Dorsolateral prefrontal cortex (tissue), 120 donors: ENCODE measurements at regions of chr1 and their contacts with region 1.

Region 1: GRCh38 chr1:53238197-53239155 is at the start of gene MAGOH:
- DNase-seq: peak; percentile 89 to 98 (median 94)
- H3K4me3 ChIP-seq: peak within 1 kb of the TSS; percentile 64 to 100 (median 96)
- H3K27ac ChIP-seq: peak within 1 kb of the TSS in 52 of 59 donors; percentile 9 to 90 (median 70)
- H3K27me3 ChIP-seq: no peaks in the 10 kb centered on the region
- CTCF ChIP-seq: peak in 18 of 56 donors; percentile 12 to 46 (median 20)
- total RNA-seq, gene MAGOH: 14.8 to 34.2 (median 24.6) TPM

Region 2: GRCh38 chr1:52404116-52404986 is 834.1 kb before region 1 on chr1 and contains the starts of genes ORC1 and PRPF38A:
- intact Hi-C with region 1: loop called in 1 of 2 experiments (anchors 5 kb)
- DNase-seq: peak; percentile 96 to 99 (median 98)
- H3K4me3 ChIP-seq: peak within 1 kb of the TSS; percentile 31 to 99 (median 90)
- H3K27ac ChIP-seq: peak within 1 kb of the TSS in 57 of 59 donors; percentile 20 to 96 (median 85)
- H3K27me3 ChIP-seq: no peaks in the 10 kb centered on the region
- CTCF ChIP-seq: peak in 44 of 56 donors; percentile 8 to 56 (median 38)
- total RNA-seq, gene ORC1: 0.17 to 1.3 (median 0.44) TPM in 115 of 120 experiments, not detected in the others
- total RNA-seq, gene PRPF38A: 30.5 to 72.7 (median 39.3) TPM

Region 3: DNA sequence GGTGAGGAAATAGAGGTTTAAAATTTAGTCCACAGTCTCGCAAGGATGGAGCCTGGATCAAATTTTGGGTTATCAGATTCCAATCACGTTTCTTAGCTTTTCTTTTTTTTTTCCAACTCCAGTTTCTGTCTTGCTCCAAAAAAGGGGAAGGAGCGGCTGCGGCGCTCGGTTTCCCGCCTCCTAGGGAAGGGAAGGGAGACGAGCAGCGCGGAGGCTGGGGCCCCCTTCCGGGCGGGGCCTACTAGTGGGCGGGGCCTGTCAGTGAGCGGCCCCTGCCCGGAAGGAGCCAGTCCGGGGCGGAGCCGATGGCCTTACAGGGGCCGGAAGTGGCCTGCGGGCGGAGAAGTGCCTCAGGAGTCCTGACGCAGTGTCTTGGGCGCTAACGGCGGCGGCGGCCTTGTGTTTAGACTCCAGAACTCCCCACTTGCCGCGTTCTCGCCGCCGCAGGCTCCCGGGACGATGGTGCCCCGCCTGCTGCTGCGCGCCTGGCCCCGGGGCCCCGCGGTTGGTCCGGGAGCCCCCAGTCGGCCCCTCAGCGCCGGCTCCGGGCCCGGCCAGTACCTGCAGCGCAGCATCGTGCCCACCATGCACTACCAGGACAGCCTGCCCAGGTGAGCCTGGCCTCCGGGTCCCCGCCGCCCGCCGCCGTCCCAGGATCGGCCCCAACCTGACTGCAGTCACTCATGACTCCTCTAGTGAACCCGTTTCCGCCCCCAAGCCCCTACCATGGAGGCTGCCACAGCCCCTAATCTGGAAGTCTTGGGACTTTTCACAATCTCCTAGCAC is 41.8 kb before region 1 on chr1 and contains the start of gene CPT2:
- intact Hi-C with region 1: loop called in 1 of 2 experiments (anchors 5 kb)
- DNase-seq: peak; percentile 87 to 96 (median 94)
- H3K4me3 ChIP-seq: peak within 1 kb of the TSS; percentile 72 to 100 (median 96)
- H3K27ac ChIP-seq: peak within 1 kb of the TSS; percentile 63 to 97 (median 92)
- H3K27me3 ChIP-seq: no peaks in the 10 kb centered on the region
- CTCF ChIP-seq: peak in 52 of 56 donors; percentile 11 to 68 (median 37)
- total RNA-seq, gene CPT2: 4.3 to 20.0 (median 10.7) TPM

Region 4: DNA sequence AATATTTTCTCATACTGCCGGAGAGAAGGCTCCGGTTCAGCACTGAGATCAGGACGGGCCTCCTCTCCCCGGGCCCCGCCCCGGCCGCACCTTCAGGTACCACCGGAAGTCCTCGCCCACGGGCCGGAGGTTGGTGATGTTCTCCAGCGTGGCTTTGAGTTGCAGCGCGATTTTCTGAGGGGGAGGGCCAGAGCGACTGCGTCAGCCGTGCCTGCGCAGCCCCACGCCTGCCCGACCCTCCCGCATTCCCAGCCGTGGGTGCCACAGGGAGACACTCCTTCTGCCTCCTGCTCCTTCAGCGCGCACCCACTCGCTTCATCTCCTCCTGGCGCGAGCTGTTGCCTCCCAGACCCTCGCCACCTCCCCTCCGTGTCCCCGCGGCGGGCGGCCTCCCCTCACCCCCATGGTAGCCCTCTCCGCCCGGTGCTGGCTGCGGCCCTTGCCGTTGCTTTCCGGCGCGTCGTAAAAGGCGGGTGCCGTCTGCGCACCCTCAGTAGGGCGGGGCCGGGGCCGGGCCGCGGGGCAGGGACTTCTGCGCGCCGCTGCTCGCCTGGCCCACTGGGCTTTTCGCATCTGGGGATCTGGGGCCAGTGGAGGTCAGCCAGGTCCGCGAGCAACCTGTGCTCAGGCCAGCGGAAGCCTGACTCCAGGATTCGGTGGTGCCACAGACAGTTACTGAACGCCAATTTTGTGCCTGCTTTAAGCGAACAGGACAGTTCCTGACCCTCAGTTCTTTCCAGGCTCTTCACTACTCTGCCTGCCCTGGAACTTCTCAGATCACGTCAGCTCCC is 18.1 kb before region 1 on chr1 and contains the start of gene CZIB:
- intact Hi-C with region 1: loop called (anchors 2 kb)
- DNase-seq: peak; percentile 80 to 97 (median 90)
- H3K4me3 ChIP-seq: peak within 1 kb of the TSS; percentile 67 to 99 (median 89)
- H3K27ac ChIP-seq: peak within 1 kb of the TSS; percentile 65 to 99 (median 96)
- H3K27me3 ChIP-seq: no peaks in the 10 kb centered on the region
- CTCF ChIP-seq: peak in 21 of 56 donors; percentile 5 to 40 (median 19)
- total RNA-seq, gene CZIB: 49.0 to 99.7 (median 72.4) TPM

Region 5: DNA sequence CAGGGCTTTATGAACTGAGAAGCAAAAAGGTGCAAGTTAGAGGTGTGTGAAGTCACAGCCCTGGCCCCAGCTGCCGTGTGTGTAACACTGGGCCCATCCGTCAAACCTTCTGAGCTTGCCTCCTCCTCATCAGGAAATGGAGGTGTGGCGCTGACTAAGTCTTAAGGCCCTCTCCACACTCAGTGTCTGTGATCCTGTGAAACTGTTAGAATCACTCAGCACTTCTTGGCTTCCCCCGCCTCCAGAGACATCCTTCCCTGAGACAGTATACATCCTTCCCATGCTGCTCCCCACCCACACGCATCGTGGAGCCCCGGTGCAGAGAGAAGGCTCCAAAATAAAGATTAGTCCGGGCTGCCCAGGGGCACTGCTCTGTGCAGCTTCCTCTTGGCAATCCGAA is 56.1 kb after region 1 on chr1:
- intact Hi-C with region 1: no loop called
- DNase-seq: peak in 7 of 10 donors; percentile 39 to 81 (median 69)
- H3K4me3 ChIP-seq: no peak overlapping the region
- H3K27ac ChIP-seq: peak overlapping the region in 43 of 59 donors; percentile 8 to 81 (median 57)
- H3K27me3 ChIP-seq: no peaks in the 10 kb centered on the region
- CTCF ChIP-seq: no peak

Region 6: DNA sequence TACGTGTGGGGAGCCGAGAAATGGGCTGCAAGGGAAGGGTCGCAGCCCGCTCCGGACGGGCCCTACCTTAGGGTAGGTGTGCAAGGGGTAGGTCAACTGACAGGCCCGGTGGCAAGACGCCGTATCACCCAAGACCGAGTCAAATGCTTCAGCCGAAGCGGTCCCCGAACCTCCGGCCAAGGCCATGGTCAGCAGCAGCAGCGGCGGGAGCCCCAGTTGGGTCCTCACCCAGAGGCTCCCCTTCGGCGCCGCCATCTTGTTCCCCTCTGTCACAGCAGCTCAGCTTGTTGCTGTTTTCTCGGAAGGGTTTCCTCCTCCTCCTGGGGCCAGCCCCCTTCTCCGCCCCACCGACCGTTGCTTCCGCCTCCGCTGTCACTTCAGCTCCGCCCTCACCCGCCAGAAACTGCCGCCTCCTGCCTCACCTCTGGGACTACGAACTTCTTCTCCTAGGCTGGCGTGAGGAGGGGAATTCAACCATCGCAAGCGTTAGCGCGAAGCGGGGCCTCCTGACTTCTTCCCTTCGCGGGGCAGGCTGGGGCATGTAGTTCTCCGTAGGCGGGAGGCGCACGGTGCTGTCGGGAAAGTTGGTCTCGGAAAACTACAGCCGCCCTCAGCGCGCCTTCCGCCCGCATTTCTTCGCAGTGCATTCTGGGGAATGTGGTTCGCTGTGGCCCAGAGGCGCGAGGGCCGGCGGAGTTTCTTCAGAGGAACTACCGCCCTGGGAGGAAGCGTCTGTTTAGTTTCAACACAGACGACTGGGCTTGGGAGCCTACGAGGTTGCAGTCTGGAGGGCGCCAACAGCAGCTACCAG is 814.7 kb after region 1 on chr1 and contains the starts of genes TCEANC2 and TMEM59:
- intact Hi-C with region 1: loop called in 1 of 2 experiments (anchors 10 kb)
- DNase-seq: peak; percentile 94 to 99 (median 98)
- H3K4me3 ChIP-seq: peak within 1 kb of the TSS; percentile 71 to 100 (median 95)
- H3K27ac ChIP-seq: peak within 1 kb of the TSS; percentile 82 to 99 (median 96)
- H3K27me3 ChIP-seq: no peaks in the 10 kb centered on the region
- CTCF ChIP-seq: peak in 30 of 56 donors; percentile 4 to 57 (median 29)
- total RNA-seq, gene TCEANC2: 5.2 to 16.1 (median 8.6) TPM
- total RNA-seq, gene TMEM59: 155 to 435 (median 269) TPM